Dorsolateral prefrontal cortex (tissue), 120 donors: ENCODE measurements at regions of chr10 and their contacts with region 1.

Region 1: DNA sequence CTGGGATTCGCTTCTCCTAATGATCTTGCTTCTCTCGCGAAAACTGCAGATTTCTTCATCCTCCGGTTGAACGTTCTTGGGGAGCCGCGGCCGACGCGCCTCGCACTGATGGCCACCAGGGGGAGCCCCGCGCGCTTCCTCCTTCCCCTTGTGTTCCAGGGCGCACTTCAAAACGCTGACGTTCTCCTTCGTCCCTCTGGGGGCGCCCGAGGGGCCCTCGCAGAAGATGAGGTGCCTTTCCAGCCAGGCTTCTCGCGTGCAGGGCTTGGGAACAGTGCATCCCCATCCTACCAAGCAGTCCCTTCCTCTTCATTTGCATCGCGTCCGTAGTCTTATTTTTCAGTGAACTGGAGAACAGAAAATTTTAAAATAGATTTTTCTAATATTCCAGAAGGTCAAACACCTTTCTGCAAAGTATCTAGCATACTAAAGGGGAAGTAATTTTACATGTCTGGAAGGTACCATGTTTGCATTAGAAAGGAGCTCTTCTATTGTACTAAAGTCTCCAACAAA is 22.5 kb downstream of the GSTO2 start:
- DNase-seq: peak; percentile 85 to 93 (median 91)
- H3K4me3 ChIP-seq: peak overlapping the region in 17 of 59 donors; percentile 0 to 39 (median 20)
- H3K27ac ChIP-seq: peak overlapping the region in 5 of 59 donors; percentile 21 to 56 (median 38)
- H3K27me3 ChIP-seq: no peaks in the 10 kb centered on the region
- CTCF ChIP-seq: peak; percentile 98 to 100 (median 100)

Region 2: GRCh38 chr10:104309976-104310674 is 18.6 kb after region 1 on chr10:
- intact Hi-C with region 1: loop called in 1 of 2 experiments (anchors 2 kb)
- DNase-seq: no peak
- H3K4me3 ChIP-seq: no peak overlapping the region
- H3K27ac ChIP-seq: peak overlapping the region in 16 of 59 donors; percentile 5 to 71 (median 26)
- H3K27me3 ChIP-seq: no peaks in the 10 kb centered on the region
- CTCF ChIP-seq: no peak

Region 3: DNA sequence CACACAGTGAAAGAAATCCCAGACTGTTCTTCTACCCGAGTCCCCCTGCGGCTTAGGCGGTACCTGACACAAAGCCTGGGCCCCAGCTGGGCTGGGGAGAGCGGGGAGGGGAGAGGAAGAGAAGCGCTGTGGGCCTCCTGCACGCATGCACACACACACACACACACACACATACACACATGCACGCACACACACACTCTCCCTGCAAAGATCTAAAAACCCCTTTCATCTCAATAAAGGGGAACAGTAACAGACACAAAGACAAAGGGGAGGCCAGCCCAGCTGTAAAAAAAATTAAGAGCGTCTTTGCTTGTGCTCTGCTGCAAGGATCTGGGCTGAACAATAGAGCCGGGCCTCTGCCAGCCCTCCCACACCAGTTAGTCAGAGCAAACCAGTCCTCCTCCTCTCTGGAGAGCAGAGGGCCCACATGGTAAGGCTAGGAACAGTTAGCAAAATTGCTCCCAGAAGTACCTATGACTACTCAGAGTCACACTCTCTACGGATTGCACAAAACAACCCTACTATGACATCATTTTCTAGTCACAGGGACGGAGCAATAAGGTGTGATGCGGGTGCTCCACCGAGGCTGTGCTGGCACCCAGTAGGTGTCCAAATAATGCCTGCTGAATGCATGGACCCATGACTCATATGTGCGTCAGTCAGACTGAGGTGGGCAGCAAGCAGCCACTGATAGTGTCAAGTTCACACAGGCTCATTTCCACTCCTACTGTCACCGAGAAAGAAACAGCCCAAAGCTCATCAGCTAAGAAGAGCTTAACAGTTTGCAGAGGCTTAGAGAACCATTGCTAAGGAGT is 37.6 kb after region 1 on chr10:
- intact Hi-C with region 1: loop called in 1 of 2 experiments (anchors 5 kb)
- DNase-seq: peak in 8 of 10 donors; percentile 61 to 80 (median 73)
- H3K4me3 ChIP-seq: peak overlapping the region in 52 of 59 donors; percentile 3 to 54 (median 32)
- H3K27ac ChIP-seq: peak overlapping the region; percentile 44 to 98 (median 92)
- H3K27me3 ChIP-seq: no peaks in the 10 kb centered on the region
- CTCF ChIP-seq: peak in 1 of 56 donors; percentile 7

Region 4: GRCh38 chr10:104350127-104350635 is 58.7 kb after region 1 on chr10:
- intact Hi-C with region 1: loop called (anchors 1 to 2 kb)
- DNase-seq: peak in 1 of 10 donors; percentile 37
- H3K4me3 ChIP-seq: peak overlapping the region in 48 of 59 donors; percentile 10 to 54 (median 36)
- H3K27ac ChIP-seq: peak overlapping the region in 28 of 59 donors; percentile 5 to 77 (median 44)
- H3K27me3 ChIP-seq: no peaks in the 10 kb centered on the region
- CTCF ChIP-seq: peak; percentile 56 to 93 (median 80)

Region 5: GRCh38 chr10:104521901-104522694 is 230.6 kb after region 1 on chr10:
- intact Hi-C with region 1: no loop called
- DNase-seq: peak in 9 of 10 donors; percentile 24 to 68 (median 57)
- H3K4me3 ChIP-seq: no peak overlapping the region
- H3K27ac ChIP-seq: peak overlapping the region in 50 of 59 donors; percentile 1 to 86 (median 62)
- H3K27me3 ChIP-seq: no peaks in the 10 kb centered on the region
- CTCF ChIP-seq: no peak